Mammary epithelial cell (primary cell): ENCODE measurements at regions of chr1 and their contacts with region 1.

Region 1: GRCh38 chr1:231357831-231358354 is 19.8 kb downstream of the SPRTN start:
- DNase-seq: peak; percentile 82
- H3K4me3 ChIP-seq: no peak overlapping the region
- H3K27ac ChIP-seq: no peak overlapping the region
- H3K4me1 ChIP-seq: peaks cover 17% of the 10 kb centered on the region
- H3K27me3 ChIP-seq: no peaks in the 10 kb centered on the region
- CTCF ChIP-seq: peak; percentile 62 to 77

Region 2: DNA sequence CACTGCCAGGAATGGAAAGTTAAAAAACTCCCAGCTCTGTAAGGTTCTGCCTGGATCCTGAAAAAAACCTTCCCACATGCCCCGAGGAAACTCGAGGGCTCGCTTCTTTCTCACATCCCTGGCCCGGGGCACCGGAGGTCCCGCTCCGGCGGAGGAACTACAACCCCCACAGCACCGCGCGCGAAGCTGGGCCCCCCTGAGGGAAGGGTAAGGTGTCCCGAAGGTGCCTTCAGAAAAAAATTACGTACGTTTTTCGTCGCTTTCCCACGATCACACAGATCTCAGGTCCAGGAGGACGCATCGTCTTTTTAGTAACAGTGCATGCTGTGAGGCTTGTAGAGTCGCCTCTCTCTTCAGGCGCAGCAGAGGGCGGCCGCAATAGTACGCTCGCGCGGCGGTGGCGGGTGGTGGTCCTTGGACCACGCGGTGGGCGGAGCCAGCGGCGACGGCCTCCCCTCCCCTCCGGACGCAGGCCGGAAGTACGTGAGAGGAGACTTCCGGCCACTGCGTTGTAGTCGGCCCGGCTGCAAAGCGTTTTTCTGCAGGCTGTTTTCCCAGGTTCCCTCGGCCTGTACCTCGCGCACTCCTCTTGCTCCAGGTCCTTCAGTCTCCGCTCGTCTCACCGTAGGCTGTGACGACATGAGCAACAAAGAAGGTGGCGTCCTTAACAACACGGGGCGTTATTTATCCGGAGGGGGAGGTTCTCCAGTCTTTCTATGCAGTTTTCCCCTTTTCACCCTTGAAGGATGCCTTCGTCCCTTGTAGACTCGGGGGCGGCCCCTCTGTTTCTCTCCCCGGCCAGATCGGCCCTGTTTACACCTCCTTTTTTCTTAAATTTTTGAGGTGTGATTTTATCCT is 170.5 kb after region 1 on chr1 and contains the start of gene TSNAX:
- CTCF ChIA-PET with region 1: no interaction called
- dilution Hi-C with region 1: no loop called
- in situ Hi-C with region 1: no loop called
- intact Hi-C with region 1: loop called (anchors 1 kb)
- DNase-seq: peak; percentile 90
- H3K4me3 ChIP-seq: peak within 1 kb of the TSS; percentile 75 to 86 (median 81)
- H3K27ac ChIP-seq: peak within 1 kb of the TSS; percentile 84
- H3K4me1 ChIP-seq: peaks cover 12% of the 10 kb centered on the region
- H3K27me3 ChIP-seq: no peaks in the 10 kb centered on the region
- CTCF ChIP-seq: no peak
- total RNA-seq, gene TSNAX: 30.8 to 35.8 TPM

Region 3: GRCh38 chr1:231584124-231584523 is 226.2 kb after region 1 on chr1:
- CTCF ChIA-PET with region 1: no interaction called
- dilution Hi-C with region 1: no loop called
- in situ Hi-C with region 1: no loop called
- intact Hi-C with region 1: loop called (anchors 1 kb)
- DNase-seq: peak; percentile 71
- H3K4me3 ChIP-seq: no peak overlapping the region
- H3K27ac ChIP-seq: no peak overlapping the region
- H3K4me1 ChIP-seq: no peaks in the 10 kb centered on the region
- H3K27me3 ChIP-seq: no peaks in the 10 kb centered on the region
- CTCF ChIP-seq: peak; percentile 7 to 42

Region 4: DNA sequence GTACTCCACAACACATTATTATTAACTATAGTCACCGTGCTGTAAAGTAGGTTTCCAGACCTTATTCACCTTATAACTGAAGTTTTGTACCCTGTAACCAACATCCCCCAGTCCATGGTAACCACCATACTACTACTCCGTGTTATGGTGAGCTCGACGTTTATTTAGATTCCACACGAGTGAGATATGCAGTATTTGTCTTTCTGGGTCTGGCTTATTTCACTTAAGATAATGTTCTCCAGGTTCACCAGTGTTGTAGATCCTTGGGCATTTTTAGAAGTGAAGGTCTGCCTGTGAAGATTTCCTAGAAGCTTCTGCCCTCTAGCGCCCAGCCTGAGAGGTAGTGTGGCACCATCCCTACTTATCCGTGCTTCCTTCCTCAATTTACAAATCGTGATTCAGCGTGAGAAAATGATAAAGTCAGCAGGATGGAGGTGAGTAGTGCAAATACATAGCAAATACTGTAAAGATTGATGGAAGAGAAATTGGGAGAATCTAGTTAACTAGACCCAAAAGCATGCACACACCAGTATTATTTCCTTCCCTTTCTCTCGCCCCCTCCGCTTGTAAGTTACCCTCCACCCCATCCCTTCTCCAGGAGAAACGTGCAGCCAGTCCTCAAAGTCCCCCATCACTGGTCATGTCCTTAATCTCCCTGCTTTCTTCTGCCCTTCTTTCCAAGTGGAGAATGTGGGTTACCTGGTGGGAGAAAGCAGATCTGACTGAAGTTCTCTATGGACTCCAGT is 232.7 kb after region 1 on chr1:
- CTCF ChIA-PET with region 1: no interaction called
- dilution Hi-C with region 1: no loop called
- in situ Hi-C with region 1: no loop called
- intact Hi-C with region 1: loop called (anchors 1 kb)
- DNase-seq: peak; percentile 51
- H3K4me3 ChIP-seq: no peak overlapping the region
- H3K27ac ChIP-seq: no peak overlapping the region
- H3K4me1 ChIP-seq: no peaks in the 10 kb centered on the region
- H3K27me3 ChIP-seq: no peaks in the 10 kb centered on the region
- CTCF ChIP-seq: peak; percentile 71 to 80

Region 5: DNA sequence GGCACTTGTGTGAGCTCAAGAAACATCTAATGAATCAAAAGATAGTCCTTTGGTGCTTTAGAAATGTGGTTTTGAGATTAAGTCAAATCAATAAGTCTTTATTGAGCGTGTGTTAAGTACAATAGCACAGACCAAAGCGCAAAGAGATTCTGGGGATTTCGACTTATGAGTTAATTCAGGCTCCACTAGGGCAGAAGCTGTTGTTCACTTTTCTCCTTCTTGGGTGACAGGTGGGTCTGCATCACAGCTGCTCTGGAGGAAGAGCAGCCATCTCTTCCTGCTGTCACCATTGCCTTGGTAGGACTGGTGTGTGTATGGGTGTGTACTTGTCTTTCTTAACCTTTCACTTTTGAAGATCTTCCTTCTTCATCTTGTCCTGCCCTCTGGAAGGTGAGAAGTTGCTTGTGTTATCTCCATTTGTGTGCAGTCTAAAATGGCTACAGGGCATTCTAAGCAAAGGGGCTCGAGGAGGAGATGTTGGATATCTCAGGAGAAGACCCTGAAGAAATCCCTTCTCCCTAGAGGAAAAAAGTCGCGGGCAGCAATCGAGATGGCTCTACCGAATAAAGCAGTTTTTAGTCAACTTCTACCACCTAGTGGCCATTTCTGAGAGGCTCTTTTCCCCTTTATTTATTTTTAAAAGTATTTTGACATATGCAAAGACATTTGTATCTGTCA is 245.8 kb after region 1 on chr1:
- CTCF ChIA-PET with region 1: interaction called, 11 read pairs
- dilution Hi-C with region 1: loop called (anchors 25 kb)
- in situ Hi-C with region 1: loop called in 1 of 2 experiments (anchors 5 kb)
- intact Hi-C with region 1: no loop called
- DNase-seq: peak; percentile 33
- H3K4me3 ChIP-seq: peak overlapping the region; percentile 54 to 91 (median 61)
- H3K27ac ChIP-seq: no peak overlapping the region
- H3K4me1 ChIP-seq: peaks cover 6% of the 10 kb centered on the region
- H3K27me3 ChIP-seq: no peaks in the 10 kb centered on the region
- CTCF ChIP-seq: peak; percentile 70

Region 6: DNA sequence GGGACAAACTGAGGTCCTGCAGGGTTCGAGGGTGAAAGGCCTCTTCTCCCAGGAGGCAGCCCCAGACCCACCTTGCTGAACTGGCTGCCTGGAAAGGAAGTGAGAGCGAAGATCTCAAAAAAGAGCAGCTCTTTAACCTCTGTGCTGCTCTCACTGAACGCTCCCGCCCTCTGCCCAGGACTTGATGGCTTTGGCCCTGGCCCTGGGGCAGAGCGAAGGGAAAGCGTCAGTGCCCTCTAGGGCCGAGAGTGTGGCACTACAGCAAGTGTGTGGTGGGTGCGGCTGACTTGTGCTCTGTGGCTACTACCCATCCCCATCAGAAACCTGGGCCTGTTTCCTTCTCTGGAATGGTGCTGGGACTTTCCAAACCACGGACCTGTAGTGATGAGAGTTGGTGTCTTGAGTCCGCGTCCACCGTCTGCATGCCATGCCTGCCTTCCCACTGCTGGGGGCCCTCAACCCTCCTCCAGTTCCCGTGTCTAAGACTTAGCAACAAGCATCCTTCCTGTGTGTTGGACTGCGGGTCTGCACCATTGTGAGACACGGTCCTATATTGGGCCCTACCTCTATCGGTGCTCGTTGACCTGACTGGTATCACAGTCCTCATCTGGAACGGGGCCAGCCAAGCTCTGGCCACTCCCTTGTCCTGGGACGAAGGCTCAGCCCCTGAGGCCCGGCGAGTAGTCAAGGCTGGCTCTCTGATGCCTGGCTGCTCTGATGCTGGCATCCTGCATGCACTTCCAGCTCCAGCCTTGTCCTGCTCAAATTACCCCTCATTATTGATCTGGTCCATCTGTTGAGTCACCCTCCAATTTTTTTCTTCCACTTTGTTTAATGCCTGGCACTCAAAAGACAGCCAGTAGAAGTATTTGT is 449.0 kb after region 1 on chr1:
- CTCF ChIA-PET with region 1: no interaction called
- dilution Hi-C with region 1: no loop called
- in situ Hi-C with region 1: no loop called
- intact Hi-C with region 1: loop called (anchors 5 kb)
- DNase-seq: peak; percentile 34
- H3K4me3 ChIP-seq: no peak overlapping the region
- H3K27ac ChIP-seq: no peak overlapping the region
- H3K4me1 ChIP-seq: peaks cover 6% of the 10 kb centered on the region
- H3K27me3 ChIP-seq: no peaks in the 10 kb centered on the region
- CTCF ChIP-seq: peak; percentile 52 to 70